ENCODE measurements at regions of chr20 and their contacts with region 1.

Region 1: DNA sequence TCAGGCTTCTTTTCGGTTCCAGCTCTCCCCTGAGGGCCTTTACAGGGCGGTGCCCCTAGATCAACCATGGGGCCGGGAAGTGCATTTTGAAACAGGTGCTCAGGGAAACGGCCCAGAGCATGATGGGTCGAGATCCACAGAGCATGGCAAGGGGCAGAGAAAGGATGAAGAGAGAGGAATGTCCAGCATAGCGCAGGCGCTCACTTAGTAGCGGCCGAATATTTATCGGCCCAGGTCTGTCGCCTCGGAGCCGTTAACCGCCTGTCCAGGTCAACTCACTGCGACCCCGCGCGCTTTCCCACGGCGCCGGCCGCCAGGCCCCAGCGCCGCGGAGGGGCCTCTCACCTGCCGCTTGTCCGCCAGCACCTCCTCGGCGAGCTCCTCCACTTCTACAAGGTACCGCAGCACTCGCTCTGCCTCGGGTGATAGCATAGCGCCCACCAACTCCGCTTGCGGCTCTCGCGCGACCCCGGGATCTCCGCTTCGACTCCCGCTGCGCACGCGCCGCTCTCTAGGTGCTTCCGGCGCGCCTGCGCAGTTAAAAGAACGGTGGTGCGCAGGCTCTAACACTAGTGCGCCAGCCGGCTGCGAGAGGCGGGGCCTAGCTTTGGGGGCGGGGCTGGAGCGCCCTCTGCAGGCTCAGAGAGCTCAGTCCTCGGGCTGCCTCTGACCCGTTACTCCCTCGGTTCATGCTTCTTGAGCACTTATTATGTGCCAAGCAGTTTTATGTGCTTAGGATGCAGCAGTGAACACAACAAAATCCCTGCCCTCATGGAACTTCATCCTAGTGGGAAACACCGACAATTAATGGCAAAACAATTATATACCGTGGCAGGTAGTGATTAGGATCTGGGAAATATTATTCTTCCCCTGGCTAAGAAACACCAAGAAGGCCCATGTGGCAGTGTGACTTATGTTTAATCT is at the start of gene PDRG1:
- DNase-seq: peak; percentile 97
- H3K4me3 Mint-ChIP-seq: peak within 1 kb of the TSS; percentile 93
- H3K27ac Mint-ChIP-seq: peak within 1 kb of the TSS; percentile 88
- H3K4me1 Mint-ChIP-seq: peaks cover 27% of the 10 kb centered on the region
- H3K27me3 Mint-ChIP-seq: peaks cover 24% of the 10 kb centered on the region

Region 2: DNA sequence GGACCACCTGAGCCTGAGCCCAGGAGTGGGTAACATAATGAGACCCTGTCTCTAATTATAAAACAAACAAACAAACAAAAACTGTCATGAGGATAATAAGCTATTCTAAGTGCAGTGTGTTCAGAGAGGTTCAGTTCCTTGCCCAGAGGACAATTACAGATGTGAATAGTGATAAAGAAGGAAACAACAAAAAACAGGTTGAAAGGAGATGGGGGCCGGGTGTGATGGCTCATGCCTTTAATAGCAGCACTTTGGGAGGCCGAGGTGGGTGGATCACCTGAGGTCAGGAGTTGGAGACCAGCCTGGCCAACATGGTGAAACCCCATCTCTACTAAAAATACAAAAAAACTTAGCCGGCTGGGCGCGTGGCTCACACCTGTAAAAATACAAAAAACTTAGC is 333.0 kb before region 1 on chr20:
- CTCF ChIA-PET with region 1: no interaction called
- DNase-seq: no peak
- H3K4me3 Mint-ChIP-seq: no peak overlapping the region
- H3K27ac Mint-ChIP-seq: no peak overlapping the region
- H3K4me1 Mint-ChIP-seq: peaks cover 5% of the 10 kb centered on the region
- H3K27me3 Mint-ChIP-seq: peaks cover 17% of the 10 kb centered on the region

Region 3: GRCh38 chr20:31835977-31836852 is 115.6 kb before region 1 on chr20:
- CTCF ChIA-PET with region 1: interaction called, 10 read pairs
- DNase-seq: peak; percentile 49
- H3K4me3 Mint-ChIP-seq: no peak overlapping the region
- H3K27ac Mint-ChIP-seq: no peak overlapping the region
- H3K4me1 Mint-ChIP-seq: peaks cover 12% of the 10 kb centered on the region
- H3K27me3 Mint-ChIP-seq: peaks cover 5% of the 10 kb centered on the region

Region 4: DNA sequence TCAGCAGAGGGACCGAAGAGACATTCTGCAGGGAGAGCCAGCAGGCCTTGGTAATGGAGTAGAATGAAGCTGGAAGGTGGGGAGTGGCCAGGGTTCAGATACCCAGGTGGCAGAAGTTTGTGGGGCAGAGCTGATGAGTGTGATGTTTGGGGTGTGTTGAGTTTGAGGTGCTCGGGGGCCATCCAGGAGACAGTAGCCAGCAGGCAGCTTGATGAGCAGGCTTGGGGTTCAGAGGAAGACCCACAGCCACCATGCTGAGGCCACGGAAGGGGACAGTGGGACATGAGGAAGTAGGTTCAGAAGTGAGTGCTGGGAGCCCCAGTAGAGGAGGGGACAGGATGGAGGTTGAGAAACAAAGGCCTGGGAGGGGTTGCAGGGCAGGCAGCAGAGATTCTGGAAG is 95.3 kb before region 1 on chr20:
- CTCF ChIA-PET with region 1: interaction called, 55 read pairs
- DNase-seq: no peak
- H3K4me3 Mint-ChIP-seq: no peak overlapping the region
- H3K27ac Mint-ChIP-seq: no peak overlapping the region
- H3K4me1 Mint-ChIP-seq: peaks cover 23% of the 10 kb centered on the region
- H3K27me3 Mint-ChIP-seq: peaks cover 15% of the 10 kb centered on the region

Region 5: DNA sequence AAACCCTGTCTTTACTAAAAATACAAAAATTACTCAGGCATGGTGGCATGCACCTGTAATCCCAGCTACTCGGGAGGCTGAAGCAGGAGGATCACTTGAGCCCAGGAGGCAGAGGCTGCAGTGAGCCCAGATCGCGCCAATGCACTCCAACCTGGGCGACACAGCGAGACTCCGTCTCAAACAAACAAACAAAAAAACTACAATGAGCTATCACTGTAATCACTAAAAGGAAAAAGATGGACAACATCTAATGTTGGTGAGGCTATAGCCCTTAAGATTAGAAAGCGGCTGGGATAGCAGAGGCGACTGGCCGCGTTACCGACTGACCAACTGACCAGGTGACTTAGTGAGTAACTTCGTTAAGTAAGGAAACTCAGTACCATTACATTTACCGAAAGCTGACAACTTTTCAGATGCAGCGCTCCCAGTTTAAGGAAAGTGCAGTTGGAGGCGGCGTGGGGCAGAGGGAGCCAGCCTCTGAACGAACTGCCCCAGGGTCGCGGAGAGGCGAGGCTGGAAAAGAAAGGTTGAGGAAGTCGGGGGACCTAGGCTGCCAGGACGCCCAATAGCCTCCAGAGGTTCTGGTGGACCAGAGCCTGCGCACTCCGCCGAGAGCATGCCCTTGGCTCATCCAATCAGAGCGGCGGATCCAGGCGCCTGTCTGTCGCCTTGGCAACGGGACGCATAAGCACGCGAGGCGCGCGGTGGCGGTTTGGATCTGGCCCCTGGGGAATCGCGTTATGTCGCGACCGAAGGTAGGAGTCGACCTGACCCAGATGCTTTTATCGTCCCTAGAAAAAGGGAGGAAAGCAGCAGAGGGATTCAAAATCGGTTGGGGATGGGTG is 72.4 kb before region 1 on chr20:
- CTCF ChIA-PET with region 1: interaction called, 12 read pairs
- DNase-seq: peak; percentile 87
- H3K4me3 Mint-ChIP-seq: peak overlapping the region; percentile 85
- H3K27ac Mint-ChIP-seq: peak overlapping the region; percentile 45
- H3K4me1 Mint-ChIP-seq: peaks cover 18% of the 10 kb centered on the region
- H3K27me3 Mint-ChIP-seq: peaks cover 44% of the 10 kb centered on the region

Region 6: DNA sequence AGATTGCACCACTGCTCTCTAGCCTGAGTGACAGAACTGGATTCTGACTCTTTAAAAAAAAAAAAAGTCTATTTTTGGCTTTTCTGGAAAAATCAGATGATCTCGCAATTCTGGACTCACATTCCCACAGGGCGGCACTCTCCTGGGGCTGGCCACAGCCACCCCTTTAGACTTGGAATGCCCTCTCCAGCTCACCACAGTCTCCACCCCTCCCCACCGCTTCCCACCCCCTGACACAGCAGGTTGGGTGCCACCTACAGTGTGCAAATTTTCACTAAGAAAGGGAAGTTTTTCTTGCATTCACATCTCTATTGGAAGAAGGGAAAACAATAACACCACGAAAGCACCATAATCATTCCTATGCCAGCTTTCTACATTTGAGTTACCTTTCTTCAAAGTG is 15.4 kb before region 1 on chr20:
- CTCF ChIA-PET with region 1: interaction called, 10 read pairs
- DNase-seq: no peak
- H3K4me3 Mint-ChIP-seq: no peak overlapping the region
- H3K27ac Mint-ChIP-seq: no peak overlapping the region
- H3K4me1 Mint-ChIP-seq: no peaks in the 10 kb centered on the region
- H3K27me3 Mint-ChIP-seq: no peaks in the 10 kb centered on the region